Left ventricle myocardium inferior (tissue), 1 donor: ENCODE measurements at regions of chr11 and their contacts with region 1.

Region 1: DNA sequence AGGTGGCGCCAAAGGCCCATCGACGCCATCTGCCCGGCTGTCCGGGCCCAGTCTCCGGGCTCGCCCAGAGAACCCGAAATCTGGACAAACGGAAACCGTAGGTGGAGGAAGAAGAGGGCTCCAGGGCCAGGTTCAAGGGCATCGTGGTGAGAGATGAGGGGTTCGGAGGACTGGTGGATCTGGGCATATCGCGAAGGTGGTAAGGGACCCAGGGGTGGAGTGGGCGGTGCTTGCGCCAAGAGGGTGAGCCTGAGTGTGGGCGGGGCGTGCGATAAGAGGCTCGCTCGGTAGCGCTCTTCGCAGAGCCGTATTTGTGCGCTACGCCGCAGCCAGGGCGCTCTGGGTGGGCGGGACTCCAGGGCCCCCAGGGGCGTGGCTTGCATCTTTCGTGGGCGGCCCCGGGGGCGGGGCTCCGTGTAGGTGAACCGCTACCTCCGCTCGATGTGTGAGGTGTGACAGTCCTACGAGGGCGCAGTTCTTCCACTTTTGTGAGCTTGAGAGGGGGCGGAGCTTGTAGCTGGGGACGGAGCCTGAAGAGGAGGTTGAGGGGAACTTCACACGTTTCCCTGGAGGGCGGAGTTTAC is 4.8 kb downstream of the CD248 start:
- DNase-seq: peak; percentile 93
- H3K4me3 ChIP-seq: peak overlapping the region; percentile 73
- H3K27ac ChIP-seq: peak overlapping the region; percentile 92
- H3K4me1 ChIP-seq: peaks cover 30% of the 10 kb centered on the region
- H3K27me3 ChIP-seq: no peaks in the 10 kb centered on the region
- CTCF ChIP-seq: peak; percentile 48

Region 2: GRCh38 chr11:66386171-66387069 is 74.4 kb after region 1 on chr11:
- intact Hi-C with region 1: loop called (anchors 5 kb)
- DNase-seq: peak; percentile 84
- H3K4me3 ChIP-seq: peak overlapping the region; percentile 55
- H3K27ac ChIP-seq: peak overlapping the region; percentile 43
- H3K4me1 ChIP-seq: peaks cover 10% of the 10 kb centered on the region
- H3K27me3 ChIP-seq: peaks cover 6% of the 10 kb centered on the region
- CTCF ChIP-seq: peak; percentile 94